ENCODE measurements at regions of chr12 and their contacts with region 1.

Region 1: DNA sequence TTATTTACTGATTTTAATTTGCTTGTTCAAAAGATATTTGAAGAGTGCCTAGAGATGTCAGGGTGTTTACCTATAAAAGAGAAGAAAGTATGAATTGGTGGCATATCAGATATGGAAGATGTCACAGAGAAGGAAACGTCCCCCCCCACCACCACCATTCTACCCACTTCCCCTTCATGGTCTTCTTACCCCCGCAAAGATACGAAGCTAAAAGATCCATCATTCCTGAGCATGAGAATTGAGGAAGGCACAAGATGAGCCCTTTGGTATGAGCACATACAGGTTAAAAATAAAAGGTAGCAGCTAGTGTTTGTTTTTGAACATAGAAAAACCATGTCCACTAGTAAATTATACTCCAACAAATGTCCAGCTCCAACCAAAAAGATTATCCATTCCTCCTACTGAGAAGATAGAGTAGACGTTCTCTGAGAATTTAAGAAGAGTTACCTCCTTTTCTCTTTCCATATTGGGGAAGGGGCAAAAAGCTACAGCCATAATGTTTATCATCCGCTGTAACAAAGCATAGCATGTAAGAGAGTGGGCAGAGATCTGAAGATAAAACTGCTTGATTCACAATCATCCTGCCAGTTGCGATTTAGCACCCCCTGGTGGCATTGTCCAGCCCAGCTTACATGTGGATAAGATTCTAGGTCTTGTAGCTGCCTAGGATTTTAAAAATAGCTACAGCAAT is 29.1 kb downstream of the NFYB start:
- DNase-seq: peak; percentile 94
- ATAC-seq: peak; percentile 99
- H3K4me3 Mint-ChIP-seq: no peak overlapping the region
- H3K27ac Mint-ChIP-seq: peak overlapping the region; percentile 44
- H3K4me1 Mint-ChIP-seq: peaks cover 7% of the 10 kb centered on the region
- H3K27me3 Mint-ChIP-seq: no peaks in the 10 kb centered on the region

Region 2: GRCh38 chr12:103680591-103681141 is 428.2 kb before region 1 on chr12:
- CTCF ChIA-PET with region 1: no interaction called
- POLR2A ChIA-PET with region 1: no interaction called
- intact Hi-C with region 1: no loop called
- DNase-seq: peak; percentile 19
- ATAC-seq: peak; percentile 51
- H3K4me3 Mint-ChIP-seq: no peak overlapping the region
- H3K27ac Mint-ChIP-seq: no peak overlapping the region
- H3K4me1 Mint-ChIP-seq: no peaks in the 10 kb centered on the region
- H3K27me3 Mint-ChIP-seq: peaks cover 2% of the 10 kb centered on the region

Region 3: DNA sequence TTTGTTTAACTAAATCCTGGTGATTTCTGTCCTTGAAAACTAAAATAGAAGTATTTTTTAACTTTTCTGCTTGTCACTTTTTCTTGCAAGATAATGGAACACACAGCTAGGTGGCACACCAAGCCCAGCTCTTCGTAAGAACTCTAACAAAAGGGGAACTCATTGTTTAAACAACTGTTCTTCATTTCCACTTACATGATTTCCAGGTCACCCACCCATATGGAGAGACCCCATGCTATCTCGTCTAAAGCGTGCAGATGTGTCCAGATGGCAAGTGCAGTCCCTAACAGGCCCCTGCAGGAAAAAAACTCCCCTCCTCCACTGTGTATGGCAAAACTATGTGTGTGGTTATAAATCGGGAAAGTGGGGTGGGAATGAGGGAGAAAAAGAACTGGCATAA is 224.6 kb before region 1 on chr12:
- CTCF ChIA-PET with region 1: interaction called, 24 read pairs
- POLR2A ChIA-PET with region 1: no interaction called
- intact Hi-C with region 1: loop called (anchors 1 kb)
- DNase-seq: peak; percentile 66
- ATAC-seq: peak; percentile 57
- H3K4me3 Mint-ChIP-seq: no peak overlapping the region
- H3K27ac Mint-ChIP-seq: no peak overlapping the region
- H3K4me1 Mint-ChIP-seq: peaks cover 18% of the 10 kb centered on the region
- H3K27me3 Mint-ChIP-seq: no peaks in the 10 kb centered on the region

Region 4: DNA sequence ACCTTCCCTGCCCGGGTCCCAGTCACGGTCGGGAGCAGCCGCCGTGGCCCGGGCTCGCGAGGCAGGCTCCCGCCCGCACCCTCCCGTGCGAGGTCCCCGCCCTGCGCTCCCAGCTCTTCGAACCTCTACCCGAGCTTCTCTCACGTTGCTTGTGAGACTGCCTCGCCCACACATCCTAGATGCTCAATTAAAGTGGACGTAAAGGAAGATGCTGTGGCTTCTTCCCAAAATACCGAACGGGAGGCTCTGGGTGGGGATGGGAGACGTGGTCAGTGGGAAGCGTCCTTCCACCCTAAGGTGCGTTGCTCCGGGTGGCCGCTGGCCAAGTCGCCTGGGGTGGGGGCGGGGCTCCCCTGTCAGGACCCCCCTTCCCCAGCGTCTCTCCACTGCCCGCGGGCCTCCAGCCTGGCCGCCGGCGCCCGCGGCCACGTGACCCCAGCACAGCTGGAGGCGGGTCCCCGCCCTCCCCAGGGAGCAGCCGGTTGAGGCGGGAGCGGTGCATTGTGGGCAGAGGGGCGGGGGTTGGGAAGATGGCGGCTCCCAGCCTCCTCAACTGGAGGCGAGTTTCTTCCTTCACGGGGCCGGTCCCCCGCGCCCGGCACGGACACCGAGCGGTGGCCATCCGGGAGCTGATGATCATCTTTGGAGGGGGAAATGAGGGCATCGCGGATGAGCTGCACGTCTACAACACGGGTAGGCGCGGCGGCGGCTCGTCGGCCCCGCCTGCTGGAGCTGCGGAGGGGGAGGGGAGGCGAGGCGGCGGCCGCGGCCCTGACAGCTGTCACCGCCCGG is 44.7 kb before region 1 on chr12 and contains the start of gene HCFC2:
- CTCF ChIA-PET with region 1: interaction called, 66 read pairs
- POLR2A ChIA-PET with region 1: no interaction called
- intact Hi-C with region 1: loop called in 1 of 2 experiments (anchors 2 kb)
- DNase-seq: peak; percentile 95
- ATAC-seq: peak; percentile 95
- H3K4me3 Mint-ChIP-seq: peak within 1 kb of the TSS; percentile 85
- H3K27ac Mint-ChIP-seq: peak within 1 kb of the TSS; percentile 89
- H3K4me1 Mint-ChIP-seq: peaks cover 20% of the 10 kb centered on the region
- H3K27me3 Mint-ChIP-seq: peaks cover 7% of the 10 kb centered on the region
- total RNA-seq, gene HCFC2: 6.4 to 6.5 TPM

Region 5: GRCh38 chr12:104090687-104091086 is 18.2 kb before region 1 on chr12:
- CTCF ChIA-PET with region 1: interaction called, 21 read pairs
- POLR2A ChIA-PET with region 1: no interaction called
- intact Hi-C with region 1: no loop called
- DNase-seq: no peak
- ATAC-seq: no peak
- H3K4me3 Mint-ChIP-seq: no peak overlapping the region
- H3K27ac Mint-ChIP-seq: no peak overlapping the region
- H3K4me1 Mint-ChIP-seq: peaks cover 4% of the 10 kb centered on the region
- H3K27me3 Mint-ChIP-seq: no peaks in the 10 kb centered on the region

Region 6: GRCh38 chr12:104126548-104126947 is 17.6 kb after region 1 on chr12:
- CTCF ChIA-PET with region 1: interaction called, 30 read pairs
- POLR2A ChIA-PET with region 1: no interaction called
- intact Hi-C with region 1: no loop called
- DNase-seq: no peak
- ATAC-seq: no peak
- H3K4me3 Mint-ChIP-seq: no peak overlapping the region
- H3K27ac Mint-ChIP-seq: no peak overlapping the region
- H3K4me1 Mint-ChIP-seq: peaks cover 10% of the 10 kb centered on the region
- H3K27me3 Mint-ChIP-seq: no peaks in the 10 kb centered on the region

Region 7: GRCh38 chr12:104182144-104182543 is 73.2 kb after region 1 on chr12:
- CTCF ChIA-PET with region 1: no interaction called
- POLR2A ChIA-PET with region 1: no interaction called
- intact Hi-C with region 1: no loop called
- DNase-seq: no peak
- ATAC-seq: no peak
- H3K4me3 Mint-ChIP-seq: no peak overlapping the region
- H3K27ac Mint-ChIP-seq: no peak overlapping the region
- H3K4me1 Mint-ChIP-seq: peaks cover 5% of the 10 kb centered on the region
- H3K27me3 Mint-ChIP-seq: no peaks in the 10 kb centered on the region